IMR-90 (cell line): ENCODE measurements at regions of chr2 and their contacts with region 1.

Region 1: DNA sequence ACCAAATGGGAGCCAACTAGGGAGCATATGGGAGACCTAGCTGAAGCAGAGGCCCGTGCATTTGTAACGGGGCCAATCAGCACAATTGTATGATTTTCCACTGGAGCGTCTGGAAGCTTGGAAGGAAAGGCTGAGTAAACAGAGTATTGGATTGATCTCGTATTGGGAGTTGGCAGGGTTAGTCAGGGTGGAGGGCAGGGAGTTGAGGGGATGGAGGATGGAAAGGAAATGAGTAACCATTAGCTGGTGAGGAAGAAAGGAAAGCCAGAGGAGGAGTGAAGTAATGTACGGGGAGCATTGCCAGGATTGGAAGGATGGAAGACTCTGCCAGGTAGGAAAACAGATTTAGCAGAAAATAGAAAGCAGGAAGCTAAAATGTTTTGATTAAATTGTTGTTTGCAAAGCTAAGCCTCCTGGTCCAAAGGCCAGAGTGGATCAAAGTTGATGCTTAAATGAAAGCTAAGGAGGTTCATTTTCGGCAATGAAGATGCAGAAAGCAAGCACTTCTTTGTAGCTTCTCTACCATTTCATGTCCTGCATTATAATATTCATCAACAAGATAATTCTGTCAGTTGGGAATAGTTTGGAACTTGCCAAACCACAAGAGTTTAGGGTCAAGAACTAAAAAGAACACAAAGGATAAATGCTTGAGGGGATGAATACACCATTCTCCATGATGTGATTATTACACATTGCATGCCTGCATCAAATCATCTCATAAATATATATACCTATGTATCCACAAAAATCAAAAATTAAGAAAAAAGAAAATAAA is 75.6 kb upstream of the TTN start:
- DNase-seq: peak; percentile 31
- ATAC-seq: no peak
- H3K4me3 ChIP-seq: no peak overlapping the region
- H3K27ac ChIP-seq: no peak overlapping the region
- H3K4me1 ChIP-seq: no peaks in the 10 kb centered on the region
- H3K27me3 ChIP-seq: no peaks in the 10 kb centered on the region
- CTCF ChIP-seq: no peak
- POLR2A ChIP-seq: no peak
- RAD21 ChIP-seq: no peak

Region 2: GRCh38 chr2:178845566-178846457 is 37.0 kb before region 1 on chr2:
- CTCF ChIA-PET with region 1: no interaction called
- POLR2A ChIA-PET with region 1: interaction called, 11 read pairs
- dilution Hi-C with region 1: no loop called
- in situ Hi-C with region 1: no loop called
- intact Hi-C with region 1: no loop called
- DNase-seq: peak; percentile 58
- ATAC-seq: no peak
- H3K4me3 ChIP-seq: no peak overlapping the region
- H3K27ac ChIP-seq: no peak overlapping the region
- H3K4me1 ChIP-seq: no peaks in the 10 kb centered on the region; the same call in 1 of the 2 replicates
- H3K27me3 ChIP-seq: no peaks in the 10 kb centered on the region
- CTCF ChIP-seq: no peak
- POLR2A ChIP-seq: no peak
- RAD21 ChIP-seq: no peak

Region 3: DNA sequence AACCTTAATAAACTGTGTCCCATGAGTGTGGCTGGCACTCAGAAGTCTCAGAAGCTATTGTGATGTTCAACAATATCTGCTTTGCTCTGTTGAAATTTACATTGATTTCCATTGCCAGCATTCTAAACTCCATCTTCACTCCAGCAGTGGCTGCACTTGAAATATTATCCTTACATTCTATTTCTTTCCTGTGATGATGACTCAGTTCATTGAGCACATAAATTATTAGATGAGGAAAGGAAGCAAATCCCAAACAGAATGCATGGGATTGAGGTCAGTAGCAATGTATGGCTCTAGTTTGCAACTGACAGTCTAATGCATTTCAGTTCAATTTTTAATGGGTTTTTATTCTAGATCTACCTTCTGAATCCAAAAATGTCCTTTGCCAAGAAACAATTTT is 16.8 kb after region 1 on chr2:
- CTCF ChIA-PET with region 1: no interaction called
- POLR2A ChIA-PET with region 1: no interaction called
- dilution Hi-C with region 1: no loop called
- in situ Hi-C with region 1: no loop called
- intact Hi-C with region 1: no loop called
- DNase-seq: no peak
- ATAC-seq: no peak
- H3K4me3 ChIP-seq: no peak overlapping the region
- H3K27ac ChIP-seq: no peak overlapping the region
- H3K4me1 ChIP-seq: no peaks in the 10 kb centered on the region
- H3K27me3 ChIP-seq: no peaks in the 10 kb centered on the region
- CTCF ChIP-seq: no peak
- POLR2A ChIP-seq: no peak
- RAD21 ChIP-seq: no peak